B cell (primary cell): ENCODE measurements at regions of chr18 and their contacts with region 1.

Region 1: GRCh38 chr18:80253871-80254492 is 6.7 kb upstream of the PARD6G start:
- DNase-seq: peak; percentile 22
- ATAC-seq: peak; percentile 51
- H3K4me3 ChIP-seq: no peak overlapping the region
- H3K4me3 Mint-ChIP-seq: no peak overlapping the region
- H3K27ac ChIP-seq: no peak overlapping the region
- H3K27ac Mint-ChIP-seq: no peak overlapping the region
- H3K4me1 ChIP-seq: no peaks in the 10 kb centered on the region
- H3K4me1 Mint-ChIP-seq: no peaks in the 10 kb centered on the region
- H3K27me3 ChIP-seq: no peaks in the 10 kb centered on the region
- H3K27me3 Mint-ChIP-seq: peaks cover 19% of the 10 kb centered on the region
- CTCF ChIP-seq: no peak

Region 2: DNA sequence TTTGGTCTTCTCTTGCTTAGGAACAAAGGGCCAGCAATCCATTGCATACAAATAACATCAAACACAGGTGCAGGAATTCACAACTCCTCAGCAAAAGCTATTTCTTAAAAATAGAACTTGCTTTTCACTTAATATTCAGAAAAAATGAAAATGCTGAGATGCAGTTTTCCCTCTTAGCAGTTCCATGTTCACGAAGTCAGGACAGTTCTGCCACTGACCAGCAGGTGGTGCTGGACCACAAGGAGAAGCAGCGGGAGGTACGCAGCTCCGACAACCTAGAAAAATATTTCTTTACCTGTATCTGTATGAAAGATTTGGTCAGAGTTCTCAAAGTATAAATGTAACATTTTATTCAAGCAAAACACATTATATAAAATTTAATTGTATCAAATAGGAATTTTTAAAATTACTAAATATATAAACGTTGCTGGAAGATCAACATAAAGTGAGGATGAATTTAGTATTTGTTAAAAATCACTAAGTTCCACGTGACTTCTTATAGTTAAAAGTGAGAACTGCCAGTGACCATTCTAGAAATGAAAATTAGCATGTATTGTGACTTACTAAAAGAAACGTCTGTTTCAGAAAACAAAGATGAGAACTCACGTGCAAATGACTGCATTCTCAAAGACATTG is 96.2 kb before region 1 on chr18:
- CTCF ChIA-PET with region 1: interaction called, 36 read pairs
- POLR2A ChIA-PET with region 1: no interaction called
- intact Hi-C with region 1: no loop called
- DNase-seq: peak; percentile 77
- ATAC-seq: peak; percentile 70
- H3K4me3 ChIP-seq: no peak overlapping the region
- H3K4me3 Mint-ChIP-seq: no peak overlapping the region
- H3K27ac ChIP-seq: no peak overlapping the region
- H3K27ac Mint-ChIP-seq: no peak overlapping the region
- H3K4me1 ChIP-seq: peaks cover 3% of the 10 kb centered on the region in 2 donors
- H3K4me1 Mint-ChIP-seq: peaks cover 12% of the 10 kb centered on the region
- H3K27me3 ChIP-seq: peaks cover 0 to 8% (median 2%) of the 10 kb centered on the region in 4 experiments
- H3K27me3 Mint-ChIP-seq: no peaks in the 10 kb centered on the region
- CTCF ChIP-seq: peak; percentile 100